Common myeloid progenitor, CD34-positive (primary cell): ENCODE measurements at regions of chr10 and their contacts with region 1.

Region 1: DNA sequence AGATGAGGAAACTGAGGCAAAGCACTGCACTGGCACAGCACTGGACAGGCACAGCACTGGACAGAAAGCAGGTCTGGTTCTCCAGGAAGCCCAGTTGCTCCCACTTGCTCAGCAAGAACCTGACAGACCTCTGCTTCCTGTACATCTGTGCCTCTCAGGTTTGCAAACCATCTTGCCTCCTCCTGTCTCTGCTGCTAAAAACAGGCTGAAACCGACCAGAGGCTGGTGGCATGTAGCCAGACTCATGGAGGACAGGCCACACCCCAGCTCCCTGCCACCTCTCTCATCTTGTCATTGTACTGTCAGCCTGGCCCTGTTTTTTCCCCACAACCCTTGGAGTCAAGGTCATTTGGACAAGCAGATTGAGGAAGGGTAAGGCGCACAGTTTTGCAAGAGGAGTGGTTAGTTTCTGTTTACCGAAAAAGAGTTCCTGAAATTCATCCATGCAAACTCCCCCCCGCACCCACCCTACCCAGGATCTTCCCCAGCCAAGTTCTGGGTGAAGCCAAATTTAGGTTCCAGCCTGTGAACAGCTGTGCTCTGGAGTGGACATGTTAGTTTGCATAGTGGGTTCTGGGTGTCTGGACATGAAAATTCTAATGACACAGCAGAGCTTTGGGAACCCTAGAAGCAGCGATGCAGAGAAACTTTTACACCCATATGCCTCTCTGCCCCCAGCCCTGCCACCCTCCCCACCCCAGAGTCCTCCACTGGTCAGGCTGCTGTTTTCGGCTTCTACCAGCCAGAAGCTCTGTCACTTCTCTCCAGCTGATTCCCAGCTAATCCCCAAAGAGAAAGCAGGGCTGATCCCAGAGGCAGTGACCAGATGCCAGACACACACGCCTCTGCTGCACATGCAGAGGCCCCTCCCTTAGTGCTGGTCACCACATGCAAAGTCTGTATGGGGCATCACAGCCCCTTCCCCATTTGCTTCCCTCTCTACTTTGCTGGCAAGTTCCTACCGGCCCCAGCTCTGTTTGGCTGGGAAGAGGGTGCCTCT is 8.5 kb upstream of the C10orf105 start:
- DNase-seq: peak in 2 of 3 donors; percentile 88 to 90
- H3K4me3 ChIP-seq: peak overlapping the region in 2 of 7 experiments; percentile 21 to 23
- H3K27ac ChIP-seq: peak overlapping the region in 1 of 2 experiments; percentile 45
- H3K4me1 ChIP-seq: peaks cover 15 to 77% (median 71%) of the 10 kb centered on the region in 4 experiments
- H3K27me3 ChIP-seq: no peaks in the 10 kb centered on the region

Region 2: DNA sequence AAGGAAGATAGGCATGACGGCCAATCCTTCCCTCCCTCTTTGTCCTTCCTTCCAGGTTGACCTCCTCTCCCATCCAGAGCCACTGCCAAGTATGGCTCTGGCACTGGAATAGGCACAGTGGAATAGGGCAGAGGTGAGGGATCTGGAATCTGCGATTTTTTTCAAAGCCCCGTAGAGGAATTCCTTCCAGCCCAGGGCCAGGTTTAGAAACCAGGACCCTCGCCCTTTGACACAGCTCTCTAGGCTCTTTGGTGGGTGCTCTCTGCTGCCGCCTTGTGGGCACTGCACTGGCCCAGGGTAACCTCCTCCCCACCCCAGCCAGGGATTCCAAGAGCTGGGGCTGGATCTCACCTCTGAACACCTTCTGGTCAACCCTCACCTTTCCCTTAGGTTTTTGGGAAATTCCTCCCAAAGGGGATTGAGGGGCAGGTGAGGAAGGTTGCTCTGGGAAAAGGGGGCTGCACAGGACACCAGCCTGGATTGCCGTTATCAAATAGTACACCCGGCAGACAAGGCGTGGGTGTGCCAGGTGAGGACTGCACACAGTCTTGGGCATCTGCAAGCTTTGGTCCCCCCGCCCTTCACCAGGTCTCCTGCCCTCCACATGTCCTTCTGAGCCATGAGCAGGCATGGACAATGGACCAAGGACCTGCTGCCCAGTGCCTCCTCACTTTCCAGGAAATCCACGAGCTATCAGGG is 31.3 kb before region 1 on chr10:
- CTCF ChIA-PET with region 1: interaction called, 10 read pairs
- POLR2A ChIA-PET with region 1: no interaction called
- DNase-seq: peak; percentile 37 to 69 (median 47)
- H3K4me3 ChIP-seq: no peak overlapping the region
- H3K27ac ChIP-seq: no peak overlapping the region
- H3K4me1 ChIP-seq: peaks cover 0 to 52% (median 24%) of the 10 kb centered on the region in 4 experiments
- H3K27me3 ChIP-seq: no peaks in the 10 kb centered on the region

Region 3: DNA sequence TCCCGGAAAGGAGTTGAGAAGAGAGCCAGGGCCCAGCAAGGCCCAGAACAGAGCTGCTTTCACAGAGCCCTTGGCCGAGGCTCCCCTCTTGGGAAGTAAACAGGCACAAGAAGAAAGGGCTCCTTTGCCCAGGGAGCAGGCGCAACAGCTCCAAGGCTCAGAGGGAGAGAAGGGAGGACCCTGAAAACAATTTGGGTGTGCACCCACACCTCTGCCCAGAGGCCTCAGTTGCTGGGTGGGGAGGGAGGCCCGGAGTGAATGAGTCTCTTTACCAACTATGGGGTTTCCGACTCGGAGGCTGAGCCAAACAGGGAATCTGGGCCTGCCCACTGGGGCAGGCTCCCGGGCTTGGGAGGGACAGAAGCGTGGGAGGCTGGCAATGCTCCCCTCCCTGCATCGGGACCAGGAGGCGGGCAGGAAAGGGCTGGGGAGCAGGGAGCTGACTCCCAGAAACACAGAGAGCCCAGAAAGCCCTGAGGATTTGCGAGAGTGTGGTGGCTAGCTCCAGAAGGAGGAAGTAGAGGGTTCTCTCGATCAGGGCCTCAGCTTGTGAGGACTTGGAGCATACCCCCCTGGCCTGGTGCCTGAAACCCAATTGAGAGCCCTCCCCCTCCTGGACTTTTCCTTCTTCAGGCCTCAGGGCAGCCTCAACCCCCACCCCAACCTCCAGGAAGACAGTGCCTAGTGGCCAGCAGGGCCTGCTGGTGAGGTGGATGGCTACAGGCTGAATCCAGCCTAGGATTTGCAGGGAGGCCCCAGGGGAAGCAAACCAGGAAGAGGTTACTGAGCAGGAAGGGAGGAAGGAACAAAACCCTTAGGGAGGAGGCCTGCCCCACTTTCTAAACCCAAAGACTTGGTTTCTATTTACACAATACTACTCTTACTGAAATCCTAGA is 14.7 kb before region 1 on chr10:
- CTCF ChIA-PET with region 1: interaction called, 41 read pairs
- POLR2A ChIA-PET with region 1: no interaction called
- DNase-seq: peak in 2 of 3 donors; percentile 67 to 73
- H3K4me3 ChIP-seq: peak overlapping the region in 2 of 7 experiments; percentile 3 to 19
- H3K27ac ChIP-seq: peak overlapping the region in 1 of 2 experiments; percentile 52
- H3K4me1 ChIP-seq: peaks cover 7 to 69% (median 40%) of the 10 kb centered on the region in 4 experiments
- H3K27me3 ChIP-seq: no peaks in the 10 kb centered on the region

Region 4: GRCh38 chr10:71748671-71749191 is 20.7 kb after region 1 on chr10:
- CTCF ChIA-PET with region 1: interaction called, 72 read pairs
- POLR2A ChIA-PET with region 1: interaction called, 12 read pairs
- DNase-seq: peak; percentile 96 to 99 (median 99)
- H3K4me3 ChIP-seq: peak overlapping the region in 4 of 7 experiments; percentile 11 to 29 (median 18)
- H3K27ac ChIP-seq: peak overlapping the region; percentile 60 to 82
- H3K4me1 ChIP-seq: peaks cover 26 to 91% (median 87%) of the 10 kb centered on the region in 4 experiments
- H3K27me3 ChIP-seq: no peaks in the 10 kb centered on the region

Region 5: GRCh38 chr10:71766702-71767419 is 38.8 kb after region 1 on chr10:
- CTCF ChIA-PET with region 1: interaction called, 122 read pairs
- POLR2A ChIA-PET with region 1: no interaction called
- DNase-seq: peak in 1 of 3 donors; percentile 28
- H3K4me3 ChIP-seq: no peak overlapping the region
- H3K27ac ChIP-seq: peak overlapping the region in 1 of 2 experiments; percentile 35
- H3K4me1 ChIP-seq: peaks cover 27 to 83% (median 71%) of the 10 kb centered on the region in 4 experiments
- H3K27me3 ChIP-seq: no peaks in the 10 kb centered on the region

Region 6: DNA sequence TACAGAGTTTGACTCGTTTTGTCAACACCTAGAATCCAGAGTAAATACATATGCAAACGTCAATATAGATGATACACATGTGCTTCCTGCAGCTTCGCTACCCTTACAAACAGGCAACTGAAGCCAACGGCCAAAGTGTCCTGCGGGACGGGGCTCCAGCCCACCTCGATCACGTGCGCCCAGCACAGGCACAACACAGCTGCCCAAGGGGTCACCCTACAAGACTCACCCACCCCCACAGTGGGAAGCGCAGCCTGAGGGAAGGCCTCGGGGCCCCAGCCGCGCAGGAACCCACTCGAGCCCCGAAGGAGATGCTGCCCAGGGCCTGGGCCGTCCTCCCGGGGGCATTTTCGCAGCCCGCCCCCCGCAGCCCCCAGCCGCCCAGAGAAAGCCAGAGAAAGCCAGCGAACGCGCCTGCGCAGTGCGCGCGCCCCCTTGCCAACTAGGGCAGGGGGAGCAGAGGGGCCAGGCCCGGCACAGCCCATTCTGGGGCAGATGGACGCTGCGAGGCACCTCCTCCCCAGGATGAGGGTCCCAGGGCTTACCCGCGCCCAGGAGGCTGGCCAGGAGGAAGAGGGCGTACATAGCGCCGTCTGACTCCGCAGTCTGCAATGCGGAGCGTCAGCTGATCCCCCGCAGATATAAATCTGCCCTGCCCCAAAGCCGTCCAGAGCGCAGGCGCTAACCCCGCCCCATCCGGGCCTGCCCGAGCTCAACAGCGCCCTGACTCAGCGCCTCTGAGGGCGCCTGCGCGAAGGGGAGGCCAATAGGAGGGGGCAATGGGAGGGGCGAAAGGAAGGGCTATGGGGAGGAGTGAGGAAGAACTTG is 122.8 kb after region 1 on chr10 and contains the start of gene PSAP:
- CTCF ChIA-PET with region 1: no interaction called
- POLR2A ChIA-PET with region 1: no interaction called
- DNase-seq: peak; percentile 96 to 97 (median 96)
- H3K4me3 ChIP-seq: peak within 1 kb of the TSS; percentile 78 to 97 (median 90)
- H3K27ac ChIP-seq: peak within 1 kb of the TSS; percentile 40 to 87
- H3K4me1 ChIP-seq: peaks cover 9 to 39% (median 28%) of the 10 kb centered on the region in 4 experiments
- H3K27me3 ChIP-seq: no peaks in the 10 kb centered on the region

Region 7: DNA sequence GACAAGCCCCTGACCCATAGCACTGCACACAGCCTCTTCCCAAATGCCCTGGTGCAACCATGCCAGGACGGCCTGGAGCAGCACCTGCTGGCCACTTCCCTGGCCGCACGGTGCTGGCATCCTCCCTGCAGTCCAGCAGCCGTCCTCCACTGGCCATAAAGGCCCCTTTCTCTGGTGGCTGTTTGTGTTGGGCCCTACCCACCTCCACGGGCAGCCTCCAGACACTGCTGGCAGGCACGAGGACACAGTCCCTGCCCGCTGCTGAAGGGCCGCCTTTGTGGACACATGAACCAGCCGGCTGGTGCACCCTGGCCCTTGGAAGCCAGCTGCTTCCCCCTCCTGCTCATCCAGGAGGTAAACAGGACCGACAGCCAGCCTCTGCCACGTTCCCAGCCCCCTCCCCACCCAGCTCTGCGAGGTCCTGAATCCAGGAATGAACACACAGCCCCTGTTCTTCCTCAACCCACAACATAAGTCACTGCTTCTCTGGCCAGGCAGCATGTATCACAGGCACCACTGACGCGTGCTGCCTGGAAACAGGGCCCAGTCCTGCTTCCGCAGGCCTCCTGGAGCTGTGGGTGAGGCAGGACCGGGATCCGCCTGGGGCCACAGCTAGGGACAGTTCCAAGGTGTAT is 316.5 kb after region 1 on chr10:
- CTCF ChIA-PET with region 1: no interaction called
- POLR2A ChIA-PET with region 1: no interaction called
- DNase-seq: no peak
- H3K4me3 ChIP-seq: no peak overlapping the region
- H3K27ac ChIP-seq: no peak overlapping the region
- H3K4me1 ChIP-seq: no peaks in the 10 kb centered on the region
- H3K27me3 ChIP-seq: no peaks in the 10 kb centered on the region